ENCODE measurements at regions of chr5 and their contacts with region 1.

Region 1: DNA sequence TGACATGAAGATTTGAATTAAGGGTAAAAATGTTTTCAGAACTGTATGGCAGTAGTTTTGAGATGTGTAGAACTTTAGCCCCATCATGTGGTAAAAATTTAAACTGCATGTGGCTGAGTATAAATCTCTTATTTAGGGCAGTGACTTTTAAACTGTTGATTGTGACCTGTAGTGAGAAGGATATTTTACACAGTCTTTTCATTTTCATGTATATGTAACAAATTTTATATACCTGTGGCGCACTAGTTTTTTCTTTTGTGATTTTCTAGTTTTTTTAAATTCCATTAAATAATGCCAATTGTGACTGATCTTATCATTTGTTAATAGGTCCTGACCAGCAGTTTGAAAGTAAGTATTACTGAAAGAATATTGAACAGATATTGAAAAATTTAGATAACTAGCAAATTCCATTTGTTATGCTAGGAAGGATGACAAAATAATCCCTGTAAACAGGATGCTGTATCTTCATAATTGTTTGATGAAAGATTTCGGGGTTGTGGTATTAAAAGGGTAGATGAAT is 47.2 kb downstream of the GPBP1 start:
- DNase-seq: peak in 2 of 5 donors; percentile 58 to 63
- H3K4me3 ChIP-seq: no peak overlapping the region
- H3K4me3 Mint-ChIP-seq: no peak overlapping the region
- H3K27ac ChIP-seq: no peak overlapping the region
- H3K27ac Mint-ChIP-seq: peak overlapping the region; percentile 34 to 91 (median 73)
- H3K4me1 ChIP-seq: peaks cover 10% of the 10 kb centered on the region
- H3K4me1 Mint-ChIP-seq: peaks cover 38 to 71% (median 50%) of the 10 kb centered on the region in 3 donors
- H3K27me3 ChIP-seq: no peaks in the 10 kb centered on the region
- H3K27me3 Mint-ChIP-seq: no peaks in the 10 kb centered on the region

Region 2: GRCh38 chr5:56900858-56901578 is 320.1 kb before region 1 on chr5:
- CTCF ChIA-PET with region 1: interaction called, 33 read pairs
- POLR2A ChIA-PET with region 1: no interaction called
- DNase-seq: peak in 4 of 5 donors; percentile 2 to 47 (median 22)
- H3K4me3 ChIP-seq: no peak overlapping the region
- H3K4me3 Mint-ChIP-seq: no peak overlapping the region
- H3K27ac ChIP-seq: no peak overlapping the region
- H3K27ac Mint-ChIP-seq: no peak overlapping the region
- H3K4me1 ChIP-seq: no peaks in the 10 kb centered on the region
- H3K4me1 Mint-ChIP-seq: no peaks in the 10 kb centered on the region
- H3K27me3 ChIP-seq: no peaks in the 10 kb centered on the region
- H3K27me3 Mint-ChIP-seq: peaks cover 1 to 6% of the 10 kb centered on the region in 2 donors

Region 3: DNA sequence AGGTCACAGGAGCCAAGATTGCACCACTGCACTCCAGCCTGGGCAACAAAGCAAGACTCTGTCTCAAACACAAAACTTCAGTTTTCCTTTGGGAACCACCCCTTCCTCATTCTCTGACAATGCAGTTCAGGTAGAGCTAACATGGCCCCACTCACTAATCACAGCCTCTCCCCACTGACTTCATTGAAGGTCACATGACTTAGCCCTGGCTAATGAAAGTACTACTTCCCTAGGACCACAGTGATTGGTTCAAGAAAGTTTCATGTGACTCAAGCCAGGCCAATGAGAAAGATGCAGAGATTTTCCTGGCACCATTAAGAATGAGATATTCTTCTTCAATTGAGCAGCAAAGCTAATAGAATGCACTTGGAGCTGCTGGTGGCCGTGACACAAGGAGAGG is 114.4 kb before region 1 on chr5:
- CTCF ChIA-PET with region 1: no interaction called
- POLR2A ChIA-PET with region 1: no interaction called
- DNase-seq: no peak
- H3K4me3 ChIP-seq: no peak overlapping the region
- H3K4me3 Mint-ChIP-seq: no peak overlapping the region
- H3K27ac ChIP-seq: no peak overlapping the region
- H3K27ac Mint-ChIP-seq: no peak overlapping the region
- H3K4me1 ChIP-seq: no peaks in the 10 kb centered on the region
- H3K4me1 Mint-ChIP-seq: no peaks in the 10 kb centered on the region
- H3K27me3 ChIP-seq: no peaks in the 10 kb centered on the region
- H3K27me3 Mint-ChIP-seq: peaks cover 7 to 13% of the 10 kb centered on the region in 2 donors

Region 4: DNA sequence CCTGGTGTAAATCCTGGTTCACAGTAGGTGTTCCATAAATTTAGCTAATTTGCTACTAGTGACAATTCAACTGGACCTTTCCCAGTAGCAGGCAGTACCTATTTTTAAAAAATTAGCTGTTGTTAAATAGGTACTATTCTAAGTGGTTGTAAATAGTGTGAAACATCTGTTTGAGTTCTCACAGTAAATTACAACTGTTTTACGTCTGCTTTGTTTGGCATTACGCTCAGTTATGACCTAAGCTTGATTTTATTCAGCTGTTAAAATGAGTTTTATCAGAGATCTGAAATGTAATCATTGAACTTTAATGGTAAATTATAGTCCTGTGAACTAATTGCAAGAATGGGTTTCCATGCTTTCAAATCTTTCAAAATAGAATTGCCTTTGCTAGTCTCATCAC is 46.7 kb after region 1 on chr5:
- CTCF ChIA-PET with region 1: no interaction called
- POLR2A ChIA-PET with region 1: no interaction called
- DNase-seq: no peak
- H3K4me3 ChIP-seq: no peak overlapping the region
- H3K4me3 Mint-ChIP-seq: no peak overlapping the region
- H3K27ac ChIP-seq: no peak overlapping the region
- H3K27ac Mint-ChIP-seq: no peak overlapping the region
- H3K4me1 ChIP-seq: no peaks in the 10 kb centered on the region
- H3K4me1 Mint-ChIP-seq: no peaks in the 10 kb centered on the region
- H3K27me3 ChIP-seq: no peaks in the 10 kb centered on the region
- H3K27me3 Mint-ChIP-seq: peaks cover 0 to 1% of the 10 kb centered on the region in 2 donors